ENCODE measurements at regions of chr6 and their contacts with region 1.

Region 1: GRCh38 chr6:33886673-33887144 is 82.9 kb upstream of the MLN start:
- DNase-seq: peak; percentile 72 to 73
- ATAC-seq: peak; percentile 85 to 97 (median 91)
- H3K4me3 ChIP-seq: no peak overlapping the region
- H3K27ac ChIP-seq: peak overlapping the region in 3 of 10 donors; percentile 1 to 43 (median 23)
- H3K4me1 ChIP-seq: peaks cover 0 to 20% (median 18%) of the 10 kb centered on the region in 9 donors
- H3K27me3 ChIP-seq: peaks cover 0 to 32% (median 12%) of the 10 kb centered on the region in 7 donors
- CTCF ChIP-seq: no peak

Region 2: DNA sequence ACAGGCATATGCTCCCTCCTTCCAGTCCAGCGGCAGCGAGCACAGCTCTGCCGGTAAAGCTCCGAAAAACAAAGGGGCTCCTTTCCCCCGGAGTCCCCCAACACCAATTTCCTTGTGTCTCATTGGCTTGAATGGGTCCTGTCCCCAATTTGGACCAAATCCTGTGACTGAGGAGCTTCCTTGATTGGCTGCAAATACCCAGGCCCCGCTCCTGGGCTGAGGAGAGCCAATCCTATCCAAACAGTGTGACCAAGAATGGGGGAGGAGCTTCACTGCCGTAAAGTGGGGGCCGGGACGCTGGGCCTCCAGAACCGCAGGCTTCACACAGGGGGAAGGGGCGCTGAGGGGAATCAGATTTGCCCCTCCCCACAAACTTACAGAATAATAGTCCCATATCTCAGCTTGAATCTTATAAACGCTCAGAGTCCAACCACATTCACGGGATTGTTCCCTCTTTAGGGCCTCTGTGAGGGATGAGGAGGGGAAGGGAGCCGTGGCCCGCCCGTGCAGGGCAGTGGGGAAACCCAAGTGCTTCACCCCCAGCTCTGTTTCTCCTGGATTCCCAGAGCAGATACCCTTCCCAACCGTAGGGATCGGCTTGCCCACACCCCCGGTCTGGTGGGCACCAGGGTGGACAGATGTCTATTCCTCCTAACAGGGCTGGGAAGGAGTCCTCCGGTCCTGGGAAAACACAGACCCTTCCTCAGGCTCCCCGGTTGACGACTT is 58.1 kb after region 1 on chr6:
- intact Hi-C with region 1: loop called in 1 of 10 experiments (anchors 2 kb)
- DNase-seq: no peak
- ATAC-seq: no peak
- H3K4me3 ChIP-seq: no peak overlapping the region
- H3K27ac ChIP-seq: no peak overlapping the region
- H3K4me1 ChIP-seq: no peaks in the 10 kb centered on the region
- H3K27me3 ChIP-seq: peaks cover 0 to 35% (median 23%) of the 10 kb centered on the region in 7 donors
- CTCF ChIP-seq: no peak

Measured in heart right ventricle (tissue), 16 donors.